Heart right ventricle (tissue), 16 donors: ENCODE measurements at regions of chr19 and their contacts with region 1.

Region 1: GRCh38 chr19:7104747-7105447 is 35.4 kb downstream of the ZNF557 start:
- DNase-seq: no peak
- ATAC-seq: peak in 2 of 8 donors; percentile 8 to 26
- H3K4me3 ChIP-seq: no peak overlapping the region
- H3K27ac ChIP-seq: no peak overlapping the region
- H3K4me1 ChIP-seq: peaks cover 0 to 12% (median 1%) of the 10 kb centered on the region in 9 donors
- H3K27me3 ChIP-seq: no peaks in the 10 kb centered on the region
- CTCF ChIP-seq: no peak

Region 2: GRCh38 chr19:7145494-7146485 is 40.9 kb after region 1 on chr19:
- intact Hi-C with region 1: loop called in 1 of 10 experiments (anchors 5 kb)
- DNase-seq: no peak
- ATAC-seq: peak in 1 of 8 donors; percentile 35
- H3K4me3 ChIP-seq: no peak overlapping the region
- H3K27ac ChIP-seq: peak overlapping the region in 1 of 10 donors; percentile 64
- H3K4me1 ChIP-seq: peaks cover 0 to 12% (median 0%) of the 10 kb centered on the region in 9 donors
- H3K27me3 ChIP-seq: no peaks in the 10 kb centered on the region
- CTCF ChIP-seq: no peak

Region 3: DNA sequence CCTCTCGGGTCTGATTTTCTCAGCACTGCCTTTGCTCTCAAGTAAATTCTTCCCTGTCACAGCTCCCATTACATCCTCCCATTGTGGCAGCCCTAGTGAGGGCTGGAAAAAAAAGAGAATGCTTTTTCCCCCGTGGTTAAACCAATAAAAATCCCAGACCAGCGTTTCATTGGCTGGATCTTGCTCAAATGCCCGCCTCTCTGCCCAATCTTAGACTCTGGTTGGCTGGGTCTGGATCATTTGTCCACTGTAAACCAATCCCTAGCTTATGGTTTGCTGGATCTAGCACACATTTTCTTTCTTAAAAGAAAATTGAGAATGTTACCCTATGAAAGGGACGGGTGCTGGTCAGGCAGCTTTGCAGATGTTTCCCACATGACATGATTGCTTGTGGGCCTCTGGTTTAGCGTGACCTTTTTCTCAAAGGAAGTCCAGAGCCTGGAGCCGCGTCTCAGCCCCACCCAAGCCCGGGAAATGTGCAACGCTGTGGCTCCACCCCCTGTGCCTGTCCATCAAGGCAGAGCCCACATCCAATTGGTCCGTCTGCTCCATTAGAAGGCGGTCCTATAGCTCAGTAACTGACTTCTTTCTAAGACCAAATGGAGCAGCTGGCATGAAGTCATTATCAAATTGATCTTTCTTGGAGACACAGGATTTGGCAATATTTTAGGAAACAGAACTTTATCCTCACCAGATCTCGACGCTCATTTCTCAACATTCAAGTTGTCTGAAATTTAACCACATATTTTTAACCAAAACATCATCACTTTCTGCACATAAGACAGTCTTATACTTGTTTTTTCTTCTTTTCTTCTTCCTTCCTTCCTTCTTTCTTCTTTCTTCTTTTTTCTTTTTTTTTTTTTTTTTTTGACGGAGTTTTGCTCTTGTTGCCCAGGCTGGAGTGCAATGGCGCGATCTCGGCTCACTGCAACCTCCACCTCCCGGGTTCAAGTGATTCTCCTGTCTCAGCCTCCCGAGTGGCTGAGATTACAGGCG is 569.4 kb after region 1 on chr19:
- intact Hi-C with region 1: loop called in 1 of 10 experiments (anchors 10 kb)
- DNase-seq: peak; percentile 40 to 64
- ATAC-seq: peak in 7 of 8 donors; percentile 62 to 91 (median 76)
- H3K4me3 ChIP-seq: no peak overlapping the region
- H3K27ac ChIP-seq: peak overlapping the region in 1 of 10 donors; percentile 60
- H3K4me1 ChIP-seq: peaks cover 0 to 34% (median 0%) of the 10 kb centered on the region in 9 donors
- H3K27me3 ChIP-seq: peaks cover 0 to 68% (median 31%) of the 10 kb centered on the region in 7 donors
- CTCF ChIP-seq: no peak